Activated CD8-positive, alpha-beta T cell treated with anti-CD3 and anti-CD28 coated beads, Interleukin-2, amount 10 ng/mL, durations not matched to agents 7 days and 5 days (primary cell): ENCODE measurements at regions of chr4 and their contacts with region 1.

Region 1: GRCh38 chr4:108109997-108110416 is 58.7 kb downstream of the LEF1 start:
- DNase-seq: no peak
- ATAC-seq: no peak
- H3K4me3 Mint-ChIP-seq: peak overlapping the region; percentile 63
- H3K27ac Mint-ChIP-seq: peak overlapping the region; percentile 87
- H3K4me1 Mint-ChIP-seq: peaks cover 93% of the 10 kb centered on the region
- H3K27me3 Mint-ChIP-seq: no peaks in the 10 kb centered on the region

Region 2: GRCh38 chr4:108094923-108095482 is 15.0 kb before region 1 on chr4:
- CTCF ChIA-PET with region 1: interaction called, 13 read pairs
- POLR2A ChIA-PET with region 1: interaction called, 14 read pairs
- DNase-seq: no peak
- ATAC-seq: no peak
- H3K4me3 Mint-ChIP-seq: no peak overlapping the region
- H3K27ac Mint-ChIP-seq: peak overlapping the region; percentile 45
- H3K4me1 Mint-ChIP-seq: peaks cover 83% of the 10 kb centered on the region
- H3K27me3 Mint-ChIP-seq: no peaks in the 10 kb centered on the region

Region 3: DNA sequence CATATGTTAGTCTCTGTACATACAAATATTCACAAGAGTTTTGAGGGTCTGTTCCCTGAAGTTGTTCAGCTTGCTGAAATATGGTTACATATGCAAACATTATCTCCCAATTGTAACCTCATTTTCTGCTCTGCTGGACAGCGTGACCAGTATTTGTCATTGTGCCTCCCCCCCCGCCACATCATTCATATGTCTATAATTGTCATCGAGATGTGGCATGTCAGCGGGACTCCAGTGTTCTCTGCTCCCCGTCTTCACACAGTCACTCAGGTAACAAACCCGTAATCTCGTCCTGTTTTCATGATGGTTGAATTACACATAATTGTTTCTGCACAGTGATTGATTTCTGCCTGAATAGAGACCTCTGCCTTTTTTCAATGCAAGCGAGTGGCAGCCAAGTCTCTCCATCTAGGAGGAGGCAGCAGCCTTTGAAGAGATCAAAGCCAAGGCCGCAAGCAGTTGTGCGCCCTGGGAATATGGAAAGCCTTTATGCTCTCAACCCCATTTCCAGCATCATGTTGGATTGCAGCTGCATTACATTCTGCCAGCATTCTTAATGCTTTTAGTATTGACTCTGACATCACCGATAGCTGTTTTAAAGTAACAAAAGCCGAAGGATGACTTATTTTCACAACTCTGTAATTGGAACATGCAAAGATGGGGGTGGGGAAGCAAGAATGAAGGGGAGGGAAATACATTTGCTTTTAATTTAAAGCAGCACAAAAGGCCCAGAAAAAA is 31.4 kb after region 1 on chr4:
- CTCF ChIA-PET with region 1: interaction called, 5 read pairs
- POLR2A ChIA-PET with region 1: interaction called, 15 read pairs
- DNase-seq: peak; percentile 48
- ATAC-seq: peak; percentile 11
- H3K4me3 Mint-ChIP-seq: peak overlapping the region; percentile 69
- H3K27ac Mint-ChIP-seq: peak overlapping the region; percentile 82
- H3K4me1 Mint-ChIP-seq: peaks cover 90% of the 10 kb centered on the region
- H3K27me3 Mint-ChIP-seq: no peaks in the 10 kb centered on the region

Region 4: GRCh38 chr4:108384544-108384943 is 274.5 kb after region 1 on chr4:
- CTCF ChIA-PET with region 1: no interaction called
- POLR2A ChIA-PET with region 1: no interaction called
- DNase-seq: no peak
- ATAC-seq: no peak
- H3K4me3 Mint-ChIP-seq: no peak overlapping the region
- H3K27ac Mint-ChIP-seq: no peak overlapping the region
- H3K4me1 Mint-ChIP-seq: peaks cover 3% of the 10 kb centered on the region
- H3K27me3 Mint-ChIP-seq: peaks cover 24% of the 10 kb centered on the region